ENCODE measurements at regions of chr1 and their contacts with region 1.

Region 1: GRCh38 chr1:218339267-218339831 is 5.8 kb upstream of the TGFB2 start:
- DNase-seq: no peak
- H3K4me3 ChIP-seq: no peak overlapping the region
- H3K27ac ChIP-seq: no peak overlapping the region
- H3K4me1 ChIP-seq: no peaks in the 10 kb centered on the region
- H3K27me3 ChIP-seq: no peaks in the 10 kb centered on the region
- CTCF ChIP-seq: peak; percentile 34 to 84 (median 68)
- POLR2A ChIP-seq: no peak

Region 2: DNA sequence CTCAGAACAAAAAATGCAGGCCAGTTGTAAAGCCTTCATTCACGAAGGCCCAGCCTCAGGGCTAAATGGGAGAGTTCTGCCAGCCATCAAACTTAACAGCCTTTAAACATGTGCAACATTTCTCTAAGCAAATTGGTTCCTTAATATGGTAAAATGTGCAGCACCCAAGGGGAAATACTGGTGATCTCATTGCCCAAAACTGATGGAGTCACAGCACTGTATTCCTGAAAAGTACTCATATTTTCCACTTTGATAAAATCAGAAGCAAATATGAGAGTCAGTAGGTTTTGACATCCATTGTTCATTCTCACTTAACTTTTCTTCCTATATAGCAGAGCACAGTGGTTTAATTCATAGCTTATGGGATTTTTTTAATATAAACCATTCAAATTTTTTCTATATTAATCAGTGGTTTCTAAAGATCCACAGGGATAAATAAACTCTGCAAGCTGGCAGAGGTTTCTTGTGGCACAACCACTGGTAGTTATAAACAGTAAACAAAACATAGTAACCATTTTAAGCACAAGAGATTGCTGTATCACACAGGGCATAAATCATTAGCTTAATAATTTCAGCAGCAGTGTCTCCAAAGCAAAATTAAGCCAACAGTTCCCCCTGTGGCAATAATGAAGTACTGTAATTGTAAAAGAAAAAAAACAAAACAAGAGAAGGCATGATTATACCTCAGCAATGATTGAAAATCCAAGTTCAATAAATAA is 727.4 kb after region 1 on chr1:
- intact Hi-C with region 1: loop called (anchors 2 kb)
- DNase-seq: no peak
- H3K4me3 ChIP-seq: no peak overlapping the region
- H3K27ac ChIP-seq: no peak overlapping the region
- H3K4me1 ChIP-seq: no peaks in the 10 kb centered on the region
- H3K27me3 ChIP-seq: no peaks in the 10 kb centered on the region
- CTCF ChIP-seq: peak in 3 of 4 experiments; percentile 30 to 53 (median 37)
- POLR2A ChIP-seq: no peak

Measured in prostate gland (tissue), 2 donors.